ENCODE measurements at regions of chr4 and their contacts with region 1.

Region 1: DNA sequence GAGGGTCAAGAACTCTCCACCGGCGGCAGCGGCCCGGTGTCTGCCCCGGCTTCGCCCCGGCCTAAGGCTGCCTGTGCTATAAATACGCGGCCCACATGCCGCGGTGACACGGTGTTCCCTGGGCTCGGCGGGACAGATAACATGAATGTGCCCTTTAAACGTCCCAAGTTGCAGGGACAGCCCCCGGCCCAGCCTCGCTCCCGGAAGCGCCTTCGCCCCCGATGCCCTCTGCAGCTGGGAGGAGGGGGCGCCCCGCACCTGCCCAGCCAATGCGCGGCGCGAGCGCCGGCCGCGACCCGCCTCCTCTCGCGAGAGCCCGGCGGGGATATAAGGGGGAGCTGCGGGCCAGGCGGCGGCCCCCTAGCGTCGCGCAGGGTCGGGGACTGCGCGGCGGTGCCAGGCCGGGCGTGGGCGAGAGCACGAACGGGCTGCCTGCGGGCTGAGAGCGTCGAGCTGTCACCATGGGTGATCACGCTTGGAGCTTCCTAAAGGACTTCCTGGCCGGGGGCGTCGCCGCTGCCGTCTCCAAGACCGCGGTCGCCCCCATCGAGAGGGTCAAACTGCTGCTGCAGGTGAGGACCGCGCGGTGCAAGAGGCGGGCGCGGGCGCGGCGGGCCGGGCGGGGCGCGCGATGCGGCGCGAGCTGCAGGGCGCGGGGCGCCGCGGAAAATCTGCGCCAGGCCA is at the start of gene SLC25A4:
- DNase-seq: peak; percentile 73 to 94 (median 86)
- ATAC-seq: peak; percentile 93
- H3K4me3 ChIP-seq: peak within 1 kb of the TSS; percentile 65 to 84
- H3K4me3 Mint-ChIP-seq: peak within 1 kb of the TSS; percentile 91
- H3K27ac ChIP-seq: peak within 1 kb of the TSS; percentile 51 to 62
- H3K27ac Mint-ChIP-seq: peak within 1 kb of the TSS; percentile 91
- H3K4me1 ChIP-seq: peaks cover 15% of the 10 kb centered on the region
- H3K4me1 Mint-ChIP-seq: peaks cover 20% of the 10 kb centered on the region
- H3K27me3 ChIP-seq: no peaks in the 10 kb centered on the region
- H3K27me3 Mint-ChIP-seq: peaks cover 8% of the 10 kb centered on the region
- CTCF ChIP-seq: peak; percentile 59
- total RNA-seq, gene SLC25A4: 10.0 to 11.0 TPM

Region 2: DNA sequence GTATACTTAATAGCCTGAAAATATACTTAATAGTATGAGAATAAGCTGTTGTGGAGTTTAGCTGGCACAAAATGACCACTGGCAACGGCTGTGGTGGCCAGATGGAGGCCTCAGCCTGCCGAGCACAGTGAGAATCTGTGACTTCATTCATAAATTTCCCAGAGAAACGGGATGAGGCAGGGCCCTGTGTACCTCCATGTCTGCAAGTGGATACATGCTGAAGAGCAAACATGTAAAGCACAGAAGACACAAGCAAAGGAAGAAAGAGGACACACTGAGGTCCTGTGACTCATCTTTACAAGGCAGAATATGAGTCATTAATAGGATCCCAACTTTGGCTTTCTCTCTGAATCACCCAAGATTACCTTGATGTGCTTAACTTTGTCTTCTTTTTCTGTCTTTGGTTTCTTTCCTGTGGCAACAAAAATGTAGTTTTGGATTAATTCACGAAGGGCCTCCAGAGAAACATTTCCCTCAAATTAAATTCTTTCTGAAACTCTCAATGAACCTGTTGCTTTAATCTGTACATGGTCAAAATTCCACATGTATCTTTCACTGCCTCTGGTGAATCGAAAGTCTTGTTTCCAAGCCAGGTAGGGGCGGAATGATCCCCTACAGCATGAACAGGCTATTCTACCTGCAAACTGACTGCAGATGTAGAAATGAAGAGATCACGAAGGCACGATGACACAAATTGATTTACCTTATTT is 725.1 kb before region 1 on chr4:
- CTCF ChIA-PET with region 1: no interaction called
- POLR2A ChIA-PET with region 1: no interaction called
- intact Hi-C with region 1: loop called in 1 of 2 experiments (anchors 5 kb)
- DNase-seq: peak in 3 of 9 experiments; percentile 14 to 68 (median 53)
- ATAC-seq: peak; percentile 71
- H3K4me3 ChIP-seq: peak overlapping the region in 1 of 2 experiments; percentile 44
- H3K4me3 Mint-ChIP-seq: peak overlapping the region; percentile 73
- H3K27ac ChIP-seq: peak overlapping the region; percentile 61 to 80
- H3K27ac Mint-ChIP-seq: peak overlapping the region; percentile 98
- H3K4me1 ChIP-seq: peaks cover 33% of the 10 kb centered on the region
- H3K4me1 Mint-ChIP-seq: peaks cover 71% of the 10 kb centered on the region
- H3K27me3 ChIP-seq: no peaks in the 10 kb centered on the region
- H3K27me3 Mint-ChIP-seq: no peaks in the 10 kb centered on the region
- CTCF ChIP-seq: no peak

Region 3: DNA sequence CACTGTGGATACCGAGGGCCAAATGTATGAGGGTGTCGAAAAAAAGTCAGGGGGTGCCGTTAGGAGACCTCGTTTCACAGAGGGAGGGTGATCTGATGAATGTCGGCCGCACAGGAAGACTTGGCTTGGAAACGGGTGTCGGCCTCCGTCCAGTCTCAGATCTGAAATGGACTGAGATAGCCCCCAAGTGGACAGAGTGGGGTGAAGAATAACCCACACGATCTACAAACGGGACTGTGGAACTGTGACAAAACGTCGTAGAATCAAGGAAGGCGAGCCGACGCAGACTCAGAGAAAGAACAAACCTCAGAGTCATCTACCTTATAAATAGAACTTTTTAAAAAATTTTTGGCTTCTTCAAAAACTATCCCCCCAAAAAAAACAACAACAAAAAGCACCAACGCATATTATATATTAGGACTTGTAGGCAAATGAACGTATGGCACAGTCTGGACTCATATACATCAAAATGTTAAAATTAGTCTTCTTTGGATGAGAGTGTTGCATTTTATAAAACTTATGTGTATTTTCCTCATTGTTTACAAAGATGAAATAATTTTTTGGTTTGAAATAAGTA is 604.9 kb before region 1 on chr4:
- CTCF ChIA-PET with region 1: no interaction called
- POLR2A ChIA-PET with region 1: interaction called, 4 read pairs
- intact Hi-C with region 1: loop called (anchors 1 to 5 kb)
- DNase-seq: peak; percentile 38 to 88 (median 65)
- ATAC-seq: peak; percentile 45
- H3K4me3 ChIP-seq: peak overlapping the region; percentile 57 to 63
- H3K4me3 Mint-ChIP-seq: peak overlapping the region; percentile 91
- H3K27ac ChIP-seq: peak overlapping the region; percentile 84 to 90
- H3K27ac Mint-ChIP-seq: peak overlapping the region; percentile 100
- H3K4me1 ChIP-seq: peaks cover 33% of the 10 kb centered on the region
- H3K4me1 Mint-ChIP-seq: peaks cover 46% of the 10 kb centered on the region
- H3K27me3 ChIP-seq: no peaks in the 10 kb centered on the region
- H3K27me3 Mint-ChIP-seq: no peaks in the 10 kb centered on the region
- CTCF ChIP-seq: peak; percentile 36

Region 4: GRCh38 chr4:185128272-185129119 is 14.6 kb before region 1 on chr4:
- CTCF ChIA-PET with region 1: interaction called, 11 read pairs
- POLR2A ChIA-PET with region 1: interaction called, 8 read pairs
- intact Hi-C with region 1: no loop called
- DNase-seq: peak in 6 of 9 experiments; percentile 24 to 60 (median 42)
- ATAC-seq: peak; percentile 75
- H3K4me3 ChIP-seq: peak overlapping the region; percentile 49 to 51
- H3K4me3 Mint-ChIP-seq: peak overlapping the region; percentile 80
- H3K27ac ChIP-seq: no peak overlapping the region
- H3K27ac Mint-ChIP-seq: no peak overlapping the region
- H3K4me1 ChIP-seq: peaks cover 10% of the 10 kb centered on the region
- H3K4me1 Mint-ChIP-seq: peaks cover 11% of the 10 kb centered on the region
- H3K27me3 ChIP-seq: peaks cover 4 to 29% of the 10 kb centered on the region in 2 experiments
- H3K27me3 Mint-ChIP-seq: peaks cover 37% of the 10 kb centered on the region
- CTCF ChIP-seq: peak; percentile 29

Region 5: DNA sequence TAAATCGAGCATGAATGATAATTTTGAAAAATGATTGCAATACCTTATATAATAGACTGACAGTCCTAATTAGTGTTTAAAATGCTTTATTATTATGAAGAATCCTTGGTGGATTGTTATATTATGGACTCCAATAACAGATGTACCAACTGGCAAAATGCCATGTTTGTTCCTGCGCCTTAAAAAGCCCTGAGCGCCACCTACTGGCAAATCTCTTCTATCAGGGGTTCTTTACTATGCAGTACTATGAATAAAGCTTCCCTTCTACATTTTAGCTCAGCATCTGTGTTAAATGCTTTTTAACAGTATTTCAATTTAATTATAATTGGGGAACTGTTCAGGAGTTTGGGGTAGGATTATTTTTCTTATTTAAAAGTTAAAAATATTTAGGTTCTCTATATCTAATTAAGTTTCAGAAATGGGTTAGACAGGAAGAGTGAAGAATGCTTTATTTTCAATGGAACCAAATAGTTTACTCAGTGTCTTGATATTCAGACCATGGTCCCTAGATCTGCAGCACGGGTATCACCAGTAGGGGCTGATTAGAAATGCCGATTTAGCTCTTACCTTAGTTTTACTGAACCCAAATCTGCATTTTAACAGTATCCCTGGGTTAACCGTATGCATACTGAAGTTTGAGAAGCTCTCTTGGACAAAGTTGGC is 40.7 kb after region 1 on chr4:
- CTCF ChIA-PET with region 1: interaction called, 9 read pairs
- POLR2A ChIA-PET with region 1: no interaction called
- intact Hi-C with region 1: loop called in 1 of 2 experiments (anchors 1 kb)
- DNase-seq: peak; percentile 40 to 90 (median 78)
- ATAC-seq: peak; percentile 75
- H3K4me3 ChIP-seq: no peak overlapping the region
- H3K4me3 Mint-ChIP-seq: no peak overlapping the region
- H3K27ac ChIP-seq: no peak overlapping the region
- H3K27ac Mint-ChIP-seq: no peak overlapping the region
- H3K4me1 ChIP-seq: peaks cover 4% of the 10 kb centered on the region
- H3K4me1 Mint-ChIP-seq: peaks cover 36% of the 10 kb centered on the region
- H3K27me3 ChIP-seq: no peaks in the 10 kb centered on the region
- H3K27me3 Mint-ChIP-seq: no peaks in the 10 kb centered on the region
- CTCF ChIP-seq: peak; percentile 95

Region 6: DNA sequence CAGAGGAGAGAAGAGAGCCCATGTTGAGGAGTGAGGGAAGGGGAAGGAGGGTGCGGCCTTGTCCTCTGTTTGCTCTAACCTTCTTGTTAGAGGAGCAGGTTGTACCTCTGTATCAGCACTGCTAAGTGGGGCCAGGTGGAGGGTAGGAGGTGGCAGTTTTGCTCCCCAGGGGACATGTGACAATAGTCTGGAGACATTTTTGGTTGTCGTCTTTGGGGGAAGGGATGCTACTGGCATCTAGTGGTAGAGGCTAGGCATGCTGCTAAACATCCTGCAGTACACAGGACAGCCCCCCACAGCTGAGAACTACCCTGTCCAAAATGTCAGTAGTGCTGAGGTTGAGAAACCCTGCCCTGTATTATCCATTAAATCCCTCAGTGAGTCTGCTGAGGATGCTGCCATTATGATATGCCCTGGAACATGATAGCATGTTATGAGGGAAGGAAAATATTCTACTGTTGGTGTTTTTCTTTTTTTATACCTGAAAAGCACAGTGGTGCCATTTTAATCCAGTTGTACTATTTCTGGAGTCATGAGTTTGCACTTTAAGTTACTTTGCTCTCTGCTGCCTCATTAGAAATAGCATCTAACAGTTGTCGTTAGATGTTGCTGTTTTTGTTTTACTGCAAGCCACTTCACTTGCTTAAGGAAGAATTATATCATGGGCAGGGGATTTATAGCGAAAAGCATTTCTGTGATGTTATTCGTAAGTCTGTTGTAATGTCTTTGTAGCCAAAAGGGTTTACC is 162.1 kb after region 1 on chr4:
- CTCF ChIA-PET with region 1: no interaction called
- POLR2A ChIA-PET with region 1: no interaction called
- intact Hi-C with region 1: loop called in 1 of 2 experiments (anchors 10 kb)
- DNase-seq: peak in 5 of 9 experiments; percentile 6 to 50 (median 45)
- ATAC-seq: peak; percentile 94
- H3K4me3 ChIP-seq: no peak overlapping the region
- H3K4me3 Mint-ChIP-seq: no peak overlapping the region
- H3K27ac ChIP-seq: no peak overlapping the region
- H3K27ac Mint-ChIP-seq: no peak overlapping the region
- H3K4me1 ChIP-seq: no peaks in the 10 kb centered on the region
- H3K4me1 Mint-ChIP-seq: no peaks in the 10 kb centered on the region
- H3K27me3 ChIP-seq: no peaks in the 10 kb centered on the region
- H3K27me3 Mint-ChIP-seq: no peaks in the 10 kb centered on the region
- CTCF ChIP-seq: peak; percentile 42

Region 7: GRCh38 chr4:185425647-185426352 is 282.7 kb after region 1 on chr4 and contains the start of gene UFSP2:
- CTCF ChIA-PET with region 1: no interaction called
- POLR2A ChIA-PET with region 1: interaction called, 3 read pairs
- intact Hi-C with region 1: loop called in 1 of 2 experiments (anchors 2 kb)
- DNase-seq: peak; percentile 75 to 97 (median 89)
- ATAC-seq: peak; percentile 86
- H3K4me3 ChIP-seq: peak within 1 kb of the TSS; percentile 87 to 90
- H3K4me3 Mint-ChIP-seq: peak within 1 kb of the TSS; percentile 83
- H3K27ac ChIP-seq: peak within 1 kb of the TSS; percentile 97 to 99
- H3K27ac Mint-ChIP-seq: peak within 1 kb of the TSS; percentile 100
- H3K4me1 ChIP-seq: peaks cover 18% of the 10 kb centered on the region
- H3K4me1 Mint-ChIP-seq: peaks cover 36% of the 10 kb centered on the region
- H3K27me3 ChIP-seq: no peaks in the 10 kb centered on the region
- H3K27me3 Mint-ChIP-seq: peaks cover 5% of the 10 kb centered on the region
- CTCF ChIP-seq: no peak
- total RNA-seq, gene UFSP2: 13.4 to 17.4 TPM

Measured in CD8-positive, alpha-beta T cell (primary cell).